Spleen (tissue), 13 donors: ENCODE measurements at regions of chr11 and their contacts with region 1.

Region 1: DNA sequence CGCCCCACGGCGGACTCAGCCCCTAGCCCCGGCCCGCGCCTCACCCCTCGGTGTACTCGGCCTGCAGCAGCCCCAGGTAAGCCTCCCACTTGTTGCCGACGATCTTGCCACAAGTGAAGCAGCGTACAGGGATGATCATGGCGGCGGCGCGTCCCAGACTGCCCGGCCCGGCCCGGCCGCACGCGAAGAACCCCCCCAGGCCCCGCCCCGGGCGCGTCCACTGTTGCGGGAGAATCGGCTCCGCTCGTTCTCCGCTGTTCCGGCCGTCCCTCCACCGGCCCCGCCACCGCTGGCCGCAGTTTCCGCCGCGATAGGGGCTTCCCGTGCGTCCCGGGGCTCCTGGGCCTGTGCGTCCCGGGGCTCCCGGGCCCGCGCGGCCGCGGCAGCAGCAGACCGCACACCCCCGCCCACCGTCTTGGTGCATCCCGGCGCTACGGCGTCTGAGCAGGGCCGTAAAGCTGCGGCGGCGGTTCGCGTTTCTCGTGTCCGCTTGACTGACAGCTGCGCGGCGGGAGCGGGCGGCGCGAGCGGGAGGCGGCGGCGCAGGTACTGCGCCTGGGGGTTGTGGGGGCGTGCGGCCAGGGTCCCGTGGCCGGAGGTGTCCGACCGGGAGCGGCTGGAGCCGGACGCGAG is at the starts of genes POLR2L and TSPAN4:
- DNase-seq: peak; percentile 97
- H3K4me3 ChIP-seq: peak within 1 kb of the TSS; percentile 91 to 100 (median 98)
- H3K27ac ChIP-seq: peak within 1 kb of the TSS; percentile 92 to 97 (median 95)
- H3K4me1 ChIP-seq: peaks cover 21 to 95% (median 61%) of the 10 kb centered on the region in 6 donors
- H3K27me3 ChIP-seq: peaks cover 0 to 27% (median 0%) of the 10 kb centered on the region in 7 donors
- CTCF ChIP-seq: peak in 2 of 11 experiments; percentile 9 to 14
- POLR2A ChIP-seq: peak; percentile 28 to 77 (median 77)
- total RNA-seq, gene POLR2L: 24.6 to 95.3 (median 62.5) TPM
- total RNA-seq, gene TSPAN4: 91.3 to 140 (median 122) TPM

Region 2: DNA sequence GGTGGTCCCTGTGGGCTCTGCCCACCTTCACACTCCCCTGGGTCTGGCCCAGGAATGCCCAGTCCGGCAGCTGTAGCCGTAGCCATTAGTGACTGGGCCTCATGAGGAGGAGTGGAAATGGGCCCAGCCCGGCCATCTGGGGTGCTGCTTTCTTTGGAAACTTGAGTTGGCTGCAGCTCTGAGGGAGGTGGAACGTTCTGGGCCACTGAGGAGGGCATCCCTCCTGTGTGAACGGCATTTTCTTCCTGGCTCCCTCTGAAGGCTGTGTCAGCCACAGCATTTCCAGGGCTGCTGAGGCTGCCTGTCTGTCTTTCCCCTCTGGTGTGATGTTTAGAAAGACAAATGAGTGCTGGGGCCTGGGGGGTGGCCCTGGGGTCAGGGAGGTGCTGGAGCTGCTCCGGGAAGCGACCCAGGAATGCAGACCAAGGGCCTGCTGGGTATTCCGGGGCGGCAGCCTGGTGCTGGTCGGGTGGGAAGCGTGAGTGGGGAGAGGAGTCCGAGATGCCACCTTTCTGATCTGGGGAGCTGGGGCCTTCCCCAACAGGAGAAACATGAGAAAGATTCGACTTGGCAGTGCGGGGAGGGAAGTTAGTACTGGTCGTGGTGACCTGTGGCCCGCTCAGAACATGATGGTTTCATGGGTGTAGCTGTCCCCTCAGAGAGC is 365.3 kb before region 1 on chr11:
- intact Hi-C with region 1: no loop called
- DNase-seq: no peak
- H3K4me3 ChIP-seq: no peak overlapping the region
- H3K27ac ChIP-seq: no peak overlapping the region
- H3K4me1 ChIP-seq: no peaks in the 10 kb centered on the region
- H3K27me3 ChIP-seq: no peaks in the 10 kb centered on the region
- CTCF ChIP-seq: no peak
- POLR2A ChIP-seq: no peak

Region 3: DNA sequence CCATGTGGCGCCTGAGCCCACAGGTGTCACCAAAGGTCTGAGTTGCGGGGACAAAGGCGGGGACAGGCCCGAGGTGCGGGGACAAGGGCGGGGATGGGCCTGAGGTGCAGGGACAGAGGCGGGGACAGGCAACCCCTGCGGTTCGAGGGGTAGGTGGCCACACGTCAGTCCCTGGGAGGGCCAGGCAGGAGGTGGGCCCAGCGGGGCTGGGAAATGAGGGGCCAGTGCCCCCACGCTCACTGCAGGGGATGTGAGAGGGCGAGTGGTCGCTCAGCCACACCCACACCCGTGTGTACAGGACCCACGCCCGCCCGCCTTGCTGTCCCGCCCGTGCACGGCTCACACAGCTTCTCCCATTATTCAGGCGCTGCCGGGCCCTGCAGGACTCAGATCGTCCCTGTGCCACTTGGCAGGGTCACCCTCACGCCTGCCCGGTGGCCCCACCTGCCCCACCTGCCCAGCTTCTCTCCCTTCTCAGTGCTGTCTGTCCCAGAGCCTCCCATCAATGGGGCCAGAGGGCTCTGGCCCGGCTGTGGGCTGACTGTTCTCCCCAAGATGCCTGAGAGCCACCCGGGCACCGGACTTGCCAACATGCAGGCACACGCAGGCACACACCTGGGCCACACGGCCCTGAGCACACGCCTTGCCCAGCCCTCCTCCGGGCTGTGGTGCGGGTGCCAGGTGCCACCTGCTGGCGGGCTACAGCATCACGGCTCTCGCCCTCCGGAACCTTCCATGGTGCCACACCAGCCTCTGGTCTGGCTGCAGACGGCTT is 208.3 kb after region 1 on chr11:
- intact Hi-C with region 1: loop called (anchors 10 kb)
- DNase-seq: peak; percentile 92
- H3K4me3 ChIP-seq: peak overlapping the region in 1 of 8 donors; percentile 25
- H3K27ac ChIP-seq: peak overlapping the region in 1 of 8 donors; percentile 51
- H3K4me1 ChIP-seq: peaks cover 0 to 73% (median 47%) of the 10 kb centered on the region in 6 donors
- H3K27me3 ChIP-seq: peaks cover 0 to 75% (median 0%) of the 10 kb centered on the region in 7 donors
- CTCF ChIP-seq: peak; percentile 88 to 96 (median 92)
- POLR2A ChIP-seq: no peak